CD4-positive, alpha-beta T cell (primary cell): ENCODE measurements at regions of chr10 and their contacts with region 1.

Region 1: DNA sequence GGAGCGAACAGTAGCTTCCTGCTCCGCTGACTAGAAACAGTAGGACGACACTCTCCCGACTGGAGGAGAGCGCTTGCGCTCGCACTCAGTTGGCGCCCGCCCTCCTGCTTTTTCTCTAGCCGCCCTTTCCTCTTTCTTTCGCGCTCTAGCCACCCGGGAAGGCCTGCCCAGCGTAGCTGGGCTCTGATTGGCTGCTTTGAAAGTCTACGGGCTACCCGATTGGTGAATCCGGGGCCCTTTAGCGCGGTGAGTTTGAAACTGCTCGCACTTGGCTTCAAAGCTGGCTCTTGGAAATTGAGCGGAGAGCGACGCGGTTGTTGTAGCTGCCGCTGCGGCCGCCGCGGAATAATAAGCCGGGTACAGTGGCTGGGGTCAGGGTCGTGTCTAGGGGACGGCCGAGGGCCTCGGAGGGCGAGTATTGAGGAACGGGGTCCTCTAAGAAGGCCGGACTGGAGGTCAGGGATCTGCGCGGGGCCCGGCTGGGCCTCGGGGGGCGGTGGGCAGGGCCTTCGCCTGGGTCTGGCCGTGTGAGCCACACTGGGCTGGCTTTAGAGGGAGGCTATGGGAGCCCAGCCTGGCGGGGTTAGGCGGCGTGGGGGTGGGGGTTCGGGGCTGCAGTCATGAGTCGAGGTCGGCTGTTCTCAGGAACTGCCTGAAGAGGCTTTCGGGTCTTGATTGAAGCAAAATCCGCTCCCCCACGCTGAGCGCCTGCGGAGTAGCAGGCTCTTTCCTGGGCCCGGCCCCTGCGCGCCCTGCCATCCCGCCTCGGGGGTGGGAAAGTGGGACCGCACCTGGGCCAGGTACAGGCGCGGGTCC is at the start of gene CDK1:
- DNase-seq: peak; percentile 89 to 98 (median 94)
- ATAC-seq: peak; percentile 97
- H3K4me3 ChIP-seq: peak within 1 kb of the TSS; percentile 67
- H3K4me3 Mint-ChIP-seq: peak within 1 kb of the TSS; percentile 98
- H3K27ac ChIP-seq: no peak within 1 kb of the TSS
- H3K27ac Mint-ChIP-seq: peak within 1 kb of the TSS; percentile 22
- H3K4me1 ChIP-seq: peaks cover 5% of the 10 kb centered on the region
- H3K4me1 Mint-ChIP-seq: peaks cover 11% of the 10 kb centered on the region
- H3K27me3 ChIP-seq: no peaks in the 10 kb centered on the region
- H3K27me3 Mint-ChIP-seq: no peaks in the 10 kb centered on the region
- CTCF ChIP-seq: no peak
- total RNA-seq, gene CDK1: 0.75 to 1.1 TPM

Region 2: GRCh38 chr10:60444494-60445064 is 333.8 kb before region 1 on chr10:
- CTCF ChIA-PET with region 1: no interaction called
- POLR2A ChIA-PET with region 1: no interaction called
- intact Hi-C with region 1: loop called in 1 of 2 experiments (anchors 5 kb)
- DNase-seq: peak in 3 of 14 experiments; percentile 12 to 21 (median 13)
- ATAC-seq: no peak
- H3K4me3 ChIP-seq: no peak overlapping the region
- H3K4me3 Mint-ChIP-seq: no peak overlapping the region
- H3K27ac ChIP-seq: no peak overlapping the region
- H3K27ac Mint-ChIP-seq: no peak overlapping the region
- H3K4me1 ChIP-seq: peaks cover 2% of the 10 kb centered on the region
- H3K4me1 Mint-ChIP-seq: peaks cover 23% of the 10 kb centered on the region
- H3K27me3 ChIP-seq: no peaks in the 10 kb centered on the region
- H3K27me3 Mint-ChIP-seq: no peaks in the 10 kb centered on the region
- CTCF ChIP-seq: peak; percentile 33

Region 3: DNA sequence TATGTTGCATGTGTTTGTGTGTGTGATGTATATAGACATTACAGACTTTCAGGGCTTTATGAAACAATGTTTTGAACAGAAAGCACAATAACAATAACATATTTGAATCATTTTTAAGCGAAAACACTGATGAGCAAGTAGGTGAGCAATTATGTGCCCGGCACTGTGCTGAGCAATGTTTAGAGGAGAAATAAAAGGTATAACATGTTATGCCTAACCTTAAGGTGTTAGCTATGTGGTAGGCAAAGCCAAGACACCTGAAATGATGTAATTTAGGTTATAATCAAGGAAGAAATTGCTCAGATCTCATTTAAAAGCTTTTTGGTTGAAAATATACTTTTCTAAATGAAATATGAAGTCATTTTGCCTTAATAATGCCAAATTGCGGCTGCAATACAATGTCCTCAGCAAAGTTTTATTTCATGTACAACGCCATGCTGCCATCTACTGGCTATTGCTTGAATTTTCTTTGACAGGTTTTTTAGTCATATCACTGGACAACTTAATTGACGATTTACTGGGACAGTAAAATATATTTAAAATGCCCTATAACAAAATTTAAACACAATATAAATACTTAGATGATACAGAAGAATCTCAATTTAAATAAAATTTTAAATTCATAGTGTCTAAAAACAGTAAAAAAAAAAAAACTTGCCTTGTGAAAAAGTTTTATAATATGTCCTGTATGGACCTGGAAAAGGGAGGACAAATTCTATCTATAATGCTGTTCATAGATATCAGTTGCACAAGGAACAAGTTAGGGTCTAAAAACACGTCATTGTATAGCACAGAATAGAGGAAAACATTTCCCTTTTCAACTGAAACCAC is 131.2 kb before region 1 on chr10:
- CTCF ChIA-PET with region 1: interaction called, 3 read pairs
- POLR2A ChIA-PET with region 1: no interaction called
- intact Hi-C with region 1: loop called in 1 of 2 experiments (anchors 5 kb)
- DNase-seq: peak in 9 of 14 experiments; percentile 8 to 78 (median 33)
- ATAC-seq: peak; percentile 40
- H3K4me3 ChIP-seq: no peak overlapping the region
- H3K4me3 Mint-ChIP-seq: no peak overlapping the region
- H3K27ac ChIP-seq: no peak overlapping the region
- H3K27ac Mint-ChIP-seq: peak overlapping the region; percentile 5
- H3K4me1 ChIP-seq: peaks cover 6% of the 10 kb centered on the region
- H3K4me1 Mint-ChIP-seq: peaks cover 66% of the 10 kb centered on the region
- H3K27me3 ChIP-seq: no peaks in the 10 kb centered on the region
- H3K27me3 Mint-ChIP-seq: no peaks in the 10 kb centered on the region
- CTCF ChIP-seq: peak; percentile 91

Region 4: DNA sequence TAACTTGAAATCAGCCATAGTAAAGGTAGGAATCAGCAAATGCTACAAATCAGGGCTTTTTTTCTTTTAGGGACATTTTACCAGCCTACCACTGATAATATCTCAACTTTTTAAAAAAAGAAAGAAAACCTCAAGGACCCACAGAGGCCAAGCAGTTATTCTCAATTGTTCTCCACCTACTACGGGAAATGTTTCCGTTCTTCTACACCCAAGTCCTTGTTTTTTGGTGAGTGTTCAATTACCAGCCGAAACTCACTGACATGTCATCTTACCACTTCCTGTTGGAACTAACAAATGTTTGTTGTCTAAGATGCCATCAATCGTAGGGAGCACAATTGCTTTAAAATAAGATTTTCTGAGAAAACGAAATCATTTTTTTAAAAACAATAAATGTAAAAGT is 50.4 kb before region 1 on chr10:
- CTCF ChIA-PET with region 1: no interaction called
- POLR2A ChIA-PET with region 1: interaction called, 10 read pairs
- intact Hi-C with region 1: no loop called
- DNase-seq: peak in 6 of 14 experiments; percentile 8 to 90 (median 52)
- ATAC-seq: peak; percentile 68
- H3K4me3 ChIP-seq: peak overlapping the region; percentile 44
- H3K4me3 Mint-ChIP-seq: peak overlapping the region; percentile 81
- H3K27ac ChIP-seq: peak overlapping the region; percentile 60 to 65
- H3K27ac Mint-ChIP-seq: peak overlapping the region; percentile 99
- H3K4me1 ChIP-seq: peaks cover 16% of the 10 kb centered on the region
- H3K4me1 Mint-ChIP-seq: peaks cover 94% of the 10 kb centered on the region
- H3K27me3 ChIP-seq: no peaks in the 10 kb centered on the region
- H3K27me3 Mint-ChIP-seq: no peaks in the 10 kb centered on the region
- CTCF ChIP-seq: no peak

Region 5: DNA sequence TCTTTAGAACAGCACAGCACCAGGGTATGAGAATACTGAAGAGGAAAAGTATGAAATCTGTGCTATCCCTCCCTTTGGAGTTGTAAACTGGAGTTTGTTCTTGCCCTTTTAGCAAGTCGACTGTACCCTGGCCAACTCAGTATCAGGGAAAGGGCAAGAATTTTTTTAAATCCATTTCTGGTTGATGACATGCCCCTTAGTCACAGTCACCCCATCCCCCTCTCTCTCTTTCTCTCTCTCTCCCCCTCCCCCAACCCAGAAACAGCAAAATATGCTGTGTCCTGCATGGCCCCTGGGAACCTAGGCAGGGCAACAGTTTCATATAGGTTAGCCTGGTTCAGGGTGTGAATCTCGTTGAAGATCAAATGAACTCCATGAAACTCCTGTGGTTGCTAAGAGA is 1848.4 kb after region 1 on chr10:
- CTCF ChIA-PET with region 1: no interaction called
- POLR2A ChIA-PET with region 1: no interaction called
- intact Hi-C with region 1: loop called in 1 of 2 experiments (anchors 5 kb)
- DNase-seq: no peak
- ATAC-seq: no peak
- H3K4me3 ChIP-seq: no peak overlapping the region
- H3K4me3 Mint-ChIP-seq: no peak overlapping the region
- H3K27ac ChIP-seq: no peak overlapping the region
- H3K27ac Mint-ChIP-seq: no peak overlapping the region
- H3K4me1 ChIP-seq: no peaks in the 10 kb centered on the region
- H3K4me1 Mint-ChIP-seq: peaks cover 8% of the 10 kb centered on the region
- H3K27me3 ChIP-seq: no peaks in the 10 kb centered on the region
- H3K27me3 Mint-ChIP-seq: no peaks in the 10 kb centered on the region
- CTCF ChIP-seq: no peak